ENCODE measurements at regions of chr7 and their contacts with region 1.

Region 1: GRCh38 chr7:105013221-105013815 is 687 bp upstream of the KMT2E start:
- DNase-seq: peak; percentile 95 to 99
- ATAC-seq: peak; percentile 81 to 86 (median 84)
- H3K4me3 ChIP-seq: peak overlapping the region; percentile 92
- H3K27ac ChIP-seq: peak overlapping the region; percentile 100
- H3K4me1 ChIP-seq: peaks cover 35% of the 10 kb centered on the region
- H3K27me3 ChIP-seq: no peaks in the 10 kb centered on the region
- CTCF ChIP-seq: peak; percentile 45

Region 2: DNA sequence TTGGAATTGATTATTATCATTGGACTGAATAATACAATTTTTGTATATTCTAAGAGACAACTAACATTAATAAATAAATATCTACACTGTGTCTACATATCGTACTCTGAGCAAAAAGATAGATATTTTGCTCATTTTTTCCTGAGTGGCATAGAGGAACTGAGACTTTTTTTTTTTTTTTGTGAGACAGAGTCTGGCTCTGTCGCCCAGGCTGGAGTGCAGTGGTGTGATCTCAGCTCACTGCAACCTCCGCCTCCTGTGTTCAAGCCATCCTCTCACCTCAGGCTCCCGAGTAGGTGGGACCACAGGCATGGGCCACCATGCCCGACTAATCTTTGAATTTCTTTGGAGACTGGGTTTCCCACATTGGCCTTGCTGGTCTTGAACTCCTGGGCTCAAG is 14.7 kb after region 1 on chr7:
- intact Hi-C with region 1: no loop called
- DNase-seq: no peak
- ATAC-seq: no peak
- H3K4me3 ChIP-seq: no peak overlapping the region
- H3K27ac ChIP-seq: no peak overlapping the region
- H3K4me1 ChIP-seq: peaks cover 66% of the 10 kb centered on the region
- H3K27me3 ChIP-seq: no peaks in the 10 kb centered on the region
- CTCF ChIP-seq: no peak

Region 3: DNA sequence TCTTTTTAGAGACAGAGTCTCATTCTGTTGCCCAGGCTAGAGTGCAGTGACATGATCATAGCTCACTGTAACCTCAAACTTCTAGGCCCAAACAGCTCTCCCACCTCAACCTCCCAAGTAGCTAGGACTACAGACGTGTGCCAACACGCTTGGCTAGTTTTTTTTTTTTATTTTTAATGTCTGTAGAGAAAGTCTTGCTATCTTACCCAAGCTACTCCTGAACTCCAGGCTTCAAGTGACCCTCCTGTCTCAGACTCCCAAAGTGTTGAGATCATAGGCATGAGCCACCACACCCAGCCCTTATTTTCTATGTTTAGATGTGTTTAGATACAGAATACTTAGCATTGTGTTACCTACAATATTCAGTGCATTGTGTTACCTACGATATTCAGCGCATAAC is 47.1 kb after region 1 on chr7:
- intact Hi-C with region 1: loop called (anchors 5 kb)
- DNase-seq: no peak
- ATAC-seq: peak in 3 of 4 donors; percentile 10 to 28 (median 17)
- H3K4me3 ChIP-seq: no peak overlapping the region
- H3K27ac ChIP-seq: no peak overlapping the region
- H3K4me1 ChIP-seq: peaks cover 41% of the 10 kb centered on the region
- H3K27me3 ChIP-seq: no peaks in the 10 kb centered on the region
- CTCF ChIP-seq: no peak

Measured in psoas muscle (tissue), 8 donors.